ENCODE measurements at regions of chr20 and their contacts with region 1.

Region 1: DNA sequence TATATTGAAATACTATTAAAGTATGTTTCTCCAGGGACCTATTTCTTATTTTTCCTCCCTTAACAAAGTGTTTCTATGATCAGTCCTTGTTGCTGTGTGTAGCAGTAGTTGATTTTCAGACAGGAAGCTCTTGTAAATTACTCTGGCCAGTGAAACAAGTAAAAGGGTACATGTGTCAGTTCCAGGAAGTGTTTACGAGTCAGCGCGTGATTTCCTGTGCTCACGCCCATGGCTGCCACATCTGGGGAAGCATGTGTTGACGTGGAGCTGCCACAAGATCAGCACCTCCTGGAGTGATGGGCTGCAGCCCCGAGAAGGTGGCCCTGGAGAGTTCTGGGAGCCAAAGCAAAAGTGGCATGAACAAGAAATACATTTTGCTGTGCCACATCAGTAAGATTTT is 38.6 kb upstream of the GGTLC1 start:
- DNase-seq: peak; percentile 74
- H3K4me3 Mint-ChIP-seq: peak overlapping the region; percentile 2
- H3K27ac Mint-ChIP-seq: peak overlapping the region; percentile 84
- H3K4me1 Mint-ChIP-seq: peaks cover 44% of the 10 kb centered on the region
- H3K27me3 Mint-ChIP-seq: no peaks in the 10 kb centered on the region

Region 2: DNA sequence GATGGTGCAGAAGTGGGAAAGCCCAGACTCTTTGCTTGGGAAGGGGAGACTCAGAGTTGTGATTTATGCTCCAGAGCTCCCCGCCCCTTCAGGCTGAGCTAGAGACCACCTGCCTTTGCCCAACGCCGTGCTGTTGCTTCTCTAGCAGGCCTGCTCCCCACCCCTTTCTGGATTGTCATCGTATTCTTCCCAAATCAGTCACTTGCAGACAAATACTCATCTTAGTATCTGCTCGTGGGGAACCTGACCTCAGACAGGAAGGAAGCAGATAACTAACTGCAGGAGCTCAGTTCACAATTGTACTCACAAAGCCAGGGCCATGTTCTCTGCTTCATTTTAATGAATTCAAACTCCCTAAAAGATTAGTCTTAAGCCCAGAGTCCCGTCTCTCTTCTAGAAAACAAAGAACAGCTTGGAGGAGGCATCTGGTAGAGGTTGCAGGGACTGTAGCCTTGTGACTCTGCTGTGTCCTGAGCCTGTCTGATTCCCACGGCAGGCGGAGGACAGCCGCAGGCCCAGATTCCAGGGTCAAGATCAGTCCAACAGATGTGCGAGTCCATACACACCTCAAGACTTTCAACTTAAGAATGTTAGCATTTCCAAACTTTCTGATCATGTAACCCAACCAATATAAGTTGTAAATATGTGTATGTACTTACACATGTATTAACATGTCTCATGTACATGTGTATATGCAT is 18.5 kb after region 1 on chr20:
- intact Hi-C with region 1: loop called (anchors 1 kb)
- DNase-seq: peak; percentile 26
- H3K4me3 Mint-ChIP-seq: no peak overlapping the region
- H3K27ac Mint-ChIP-seq: peak overlapping the region; percentile 57
- H3K4me1 Mint-ChIP-seq: peaks cover 57% of the 10 kb centered on the region
- H3K27me3 Mint-ChIP-seq: no peaks in the 10 kb centered on the region

Region 3: DNA sequence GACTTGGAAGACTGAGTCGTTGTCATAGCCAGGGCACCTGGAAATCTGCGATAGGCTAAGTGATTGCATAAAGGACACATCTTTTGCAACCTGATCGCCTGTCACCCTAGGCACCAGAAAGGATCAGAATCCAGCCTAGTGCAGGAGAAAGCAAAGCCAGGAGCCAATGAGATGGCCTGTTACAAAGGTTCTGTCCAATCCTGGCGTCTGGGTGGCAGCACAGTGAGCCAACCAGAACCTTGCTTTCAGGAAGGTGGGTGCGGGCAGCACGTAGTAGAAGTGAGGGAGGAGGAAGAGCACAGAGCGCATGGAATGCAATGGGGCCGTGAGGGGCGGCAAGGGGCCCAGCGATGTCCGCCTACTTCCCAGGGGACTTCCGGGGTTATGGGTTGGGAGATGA is 81.8 kb after region 1 on chr20:
- intact Hi-C with region 1: no loop called
- DNase-seq: no peak
- H3K4me3 Mint-ChIP-seq: no peak overlapping the region
- H3K27ac Mint-ChIP-seq: no peak overlapping the region
- H3K4me1 Mint-ChIP-seq: peaks cover 5% of the 10 kb centered on the region
- H3K27me3 Mint-ChIP-seq: peaks cover 8% of the 10 kb centered on the region